ENCODE measurements at regions of chr3 and their contacts with region 1.

Region 1: DNA sequence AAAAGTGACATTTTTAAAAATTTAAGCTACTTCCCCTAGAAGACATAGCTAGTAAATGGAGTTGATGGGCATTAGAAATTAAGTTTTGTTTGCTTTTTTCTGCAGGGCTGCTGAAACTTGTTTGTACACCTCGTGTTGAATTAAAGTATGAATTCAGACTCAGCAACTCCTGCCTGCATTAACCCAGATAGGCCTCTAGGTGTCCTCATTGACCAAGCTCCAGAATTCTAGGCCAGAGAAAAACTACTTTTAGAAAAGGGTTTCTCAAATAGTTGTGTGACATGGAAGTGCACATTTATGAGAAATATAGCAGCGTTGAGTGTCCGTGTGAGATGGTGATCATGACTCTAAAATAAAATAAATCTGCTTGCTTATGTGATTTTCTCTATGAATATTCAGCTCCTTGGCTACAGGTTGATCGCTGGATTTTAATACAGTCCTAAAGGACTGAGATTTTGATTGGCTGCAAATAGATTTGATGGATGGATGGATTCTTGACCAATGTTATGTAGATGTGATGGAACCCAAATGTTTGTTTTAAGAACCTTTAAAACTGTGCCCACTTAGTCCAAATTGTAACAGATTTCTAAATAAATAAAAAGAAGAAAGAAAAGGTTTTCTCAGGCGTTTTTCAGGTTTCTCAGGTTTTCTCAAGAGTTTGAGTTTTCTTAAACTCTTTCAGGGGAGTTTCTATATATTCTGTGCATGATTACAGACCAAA is 39.4 kb upstream of the LMOD3 start:
- DNase-seq: peak in 4 of 5 donors; percentile 51 to 75 (median 58)
- H3K4me3 ChIP-seq: no peak overlapping the region
- H3K27ac ChIP-seq: no peak overlapping the region
- H3K4me1 ChIP-seq: no peaks in the 10 kb centered on the region
- H3K27me3 ChIP-seq: no peaks in the 10 kb centered on the region
- CTCF ChIP-seq: peak; percentile 94

Region 2: GRCh38 chr3:69273896-69274295 is 112.1 kb after region 1 on chr3:
- intact Hi-C with region 1: no loop called
- DNase-seq: no peak
- H3K4me3 ChIP-seq: no peak overlapping the region
- H3K27ac ChIP-seq: no peak overlapping the region
- H3K4me1 ChIP-seq: no peaks in the 10 kb centered on the region
- H3K27me3 ChIP-seq: no peaks in the 10 kb centered on the region
- CTCF ChIP-seq: no peak

Region 3: GRCh38 chr3:69306239-69307185 is 144.8 kb after region 1 on chr3:
- intact Hi-C with region 1: loop called (anchors 10 kb)
- DNase-seq: peak; percentile 74 to 94 (median 79)
- H3K4me3 ChIP-seq: no peak overlapping the region
- H3K27ac ChIP-seq: peak overlapping the region in 1 of 2 donors; percentile 37
- H3K4me1 ChIP-seq: peaks cover 0 to 2% (median 0%) of the 10 kb centered on the region in 3 donors
- H3K27me3 ChIP-seq: no peaks in the 10 kb centered on the region
- CTCF ChIP-seq: peak; percentile 91

Region 4: DNA sequence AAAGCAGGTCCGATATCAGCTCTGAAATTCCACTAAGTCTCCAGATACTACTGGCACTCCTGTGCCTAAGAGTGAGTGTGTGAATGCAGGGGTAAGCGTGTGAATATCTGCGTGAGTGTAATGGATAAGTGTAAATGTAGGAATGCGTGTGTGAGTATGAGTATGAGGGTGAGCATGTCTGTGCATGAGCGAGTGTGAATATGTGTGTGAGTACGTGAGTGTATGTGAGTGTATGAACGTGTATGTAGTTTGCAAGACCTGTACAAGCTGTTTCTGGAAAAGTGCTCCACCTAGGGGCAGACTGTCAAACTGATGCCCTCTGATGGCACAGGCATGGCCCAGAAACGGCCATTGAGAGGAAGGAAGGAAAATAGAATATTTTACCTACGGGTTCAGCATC is 248.5 kb after region 1 on chr3:
- intact Hi-C with region 1: loop called (anchors 10 kb)
- DNase-seq: peak in 4 of 5 donors; percentile 68 to 85 (median 76)
- H3K4me3 ChIP-seq: peak overlapping the region in 2 of 3 donors; percentile 35 to 57
- H3K27ac ChIP-seq: peak overlapping the region; percentile 20 to 39
- H3K4me1 ChIP-seq: peaks cover 0 to 13% (median 9%) of the 10 kb centered on the region in 3 donors
- H3K27me3 ChIP-seq: no peaks in the 10 kb centered on the region
- CTCF ChIP-seq: peak; percentile 92

Region 5: GRCh38 chr3:69484507-69485393 is 323.0 kb after region 1 on chr3:
- intact Hi-C with region 1: no loop called
- DNase-seq: peak in 1 of 5 donors; percentile 59
- H3K4me3 ChIP-seq: no peak overlapping the region
- H3K27ac ChIP-seq: no peak overlapping the region
- H3K4me1 ChIP-seq: no peaks in the 10 kb centered on the region
- H3K27me3 ChIP-seq: no peaks in the 10 kb centered on the region
- CTCF ChIP-seq: no peak

Measured in kidney (tissue), 22 donors.